Endothelial cell of umbilical vein (primary cell): ENCODE measurements at regions of chr3 and their contacts with region 1.

Region 1: GRCh38 chr3:11954312-11954934 is 49.8 kb upstream of the SYN2 start:
- DNase-seq: no peak
- H3K4me3 ChIP-seq: no peak overlapping the region
- H3K27ac ChIP-seq: no peak overlapping the region
- H3K4me1 ChIP-seq: no peaks in the 10 kb centered on the region
- H3K27me3 ChIP-seq: no peaks in the 10 kb centered on the region
- CTCF ChIP-seq: no peak
- POLR2A ChIP-seq: no peak

Region 2: DNA sequence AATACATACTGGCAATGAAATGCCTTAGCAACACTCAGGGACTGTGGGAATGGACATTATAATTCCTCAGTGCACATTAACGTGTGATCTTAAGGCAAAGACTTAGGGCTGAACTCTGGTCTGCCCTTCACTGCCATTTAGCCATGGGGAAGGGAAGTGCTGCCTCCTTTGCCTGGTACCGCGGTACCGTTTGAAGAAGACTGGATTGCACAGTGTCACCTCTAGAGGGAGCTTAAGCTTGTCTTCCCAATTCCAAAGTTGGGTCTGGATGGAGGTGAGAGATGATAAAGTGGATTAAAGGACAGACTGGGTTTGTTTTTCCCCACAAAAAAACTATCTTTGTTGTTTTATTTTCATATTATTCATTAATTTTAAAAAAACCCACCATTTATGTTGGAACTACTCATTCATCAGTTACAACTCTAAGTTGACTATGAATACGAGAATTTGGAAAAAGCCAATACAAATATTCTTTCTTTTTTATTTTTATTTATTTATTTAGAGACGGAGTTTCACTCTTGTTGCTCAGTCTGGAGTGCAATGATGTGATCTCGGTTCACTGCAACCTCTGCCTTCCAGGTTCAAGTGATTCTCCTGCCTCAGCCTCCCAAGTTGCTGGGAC is 10.3 kb before region 1 on chr3:
- CTCF ChIA-PET with region 1: interaction called, 18 read pairs
- POLR2A ChIA-PET with region 1: no interaction called
- dilution Hi-C with region 1: no loop called
- intact Hi-C with region 1: no loop called
- DNase-seq: peak; percentile 42
- H3K4me3 ChIP-seq: no peak overlapping the region
- H3K27ac ChIP-seq: no peak overlapping the region
- H3K4me1 ChIP-seq: no peaks in the 10 kb centered on the region
- H3K27me3 ChIP-seq: no peaks in the 10 kb centered on the region
- CTCF ChIP-seq: peak; percentile 60 to 67
- POLR2A ChIP-seq: no peak

Region 3: DNA sequence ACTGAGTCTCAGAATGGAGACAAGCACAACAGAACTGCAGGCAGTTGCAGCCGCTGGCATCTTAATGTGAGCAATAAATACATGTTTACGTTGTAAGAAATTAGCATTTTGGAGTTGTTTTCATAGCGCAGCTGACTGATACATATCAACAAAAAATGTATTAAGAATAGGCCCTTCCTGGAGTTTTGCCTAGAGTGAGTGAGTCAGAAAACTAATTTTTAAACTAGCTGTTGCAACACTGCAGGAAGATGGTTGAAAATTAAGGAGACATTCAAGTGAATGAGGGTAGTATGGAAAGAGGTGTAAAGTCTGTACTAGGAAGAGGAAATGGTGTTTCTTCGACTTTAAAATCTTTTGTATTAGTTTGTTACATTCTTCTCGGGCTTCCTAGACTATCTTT is 243.9 kb after region 1 on chr3:
- CTCF ChIA-PET with region 1: no interaction called
- POLR2A ChIA-PET with region 1: no interaction called
- dilution Hi-C with region 1: no loop called
- intact Hi-C with region 1: no loop called
- DNase-seq: peak; percentile 13
- H3K4me3 ChIP-seq: no peak overlapping the region
- H3K27ac ChIP-seq: no peak overlapping the region
- H3K4me1 ChIP-seq: peaks cover 13% of the 10 kb centered on the region
- H3K27me3 ChIP-seq: no peaks in the 10 kb centered on the region
- CTCF ChIP-seq: no peak
- POLR2A ChIP-seq: no peak